Activated T-helper 2 cell treated with anti-CD3 and anti-CD28 coated beads, Interferon-gamma antibody, Interleukin-2, Interleukin-4, amounts not matched to agents 10 μg/mL and 5 μg/mL and 100 μg/mL, durations not matched to agents 14 hours and 24 hours and 36 hours (primary cell): ENCODE measurements at regions of chr1 and their contacts with region 1.

Region 1: GRCh38 chr1:166975361-166976129 is at the start of gene ILDR2:
- DNase-seq: peak; percentile 54
- H3K4me3 Mint-ChIP-seq: peak within 1 kb of the TSS; percentile 97
- H3K27ac Mint-ChIP-seq: peak within 1 kb of the TSS; percentile 88
- H3K4me1 Mint-ChIP-seq: peaks cover 54% of the 10 kb centered on the region
- H3K27me3 Mint-ChIP-seq: peaks cover 18% of the 10 kb centered on the region
- total RNA-seq, gene ILDR2: 18.5 and 22.8 TPM in 2 replicates

Region 2: GRCh38 chr1:166544561-166544960 is 431.0 kb before region 1 on chr1:
- intact Hi-C with region 1: no loop called
- DNase-seq: no peak
- H3K4me3 Mint-ChIP-seq: no peak overlapping the region
- H3K27ac Mint-ChIP-seq: no peak overlapping the region
- H3K4me1 Mint-ChIP-seq: no peaks in the 10 kb centered on the region
- H3K27me3 Mint-ChIP-seq: no peaks in the 10 kb centered on the region

Region 3: DNA sequence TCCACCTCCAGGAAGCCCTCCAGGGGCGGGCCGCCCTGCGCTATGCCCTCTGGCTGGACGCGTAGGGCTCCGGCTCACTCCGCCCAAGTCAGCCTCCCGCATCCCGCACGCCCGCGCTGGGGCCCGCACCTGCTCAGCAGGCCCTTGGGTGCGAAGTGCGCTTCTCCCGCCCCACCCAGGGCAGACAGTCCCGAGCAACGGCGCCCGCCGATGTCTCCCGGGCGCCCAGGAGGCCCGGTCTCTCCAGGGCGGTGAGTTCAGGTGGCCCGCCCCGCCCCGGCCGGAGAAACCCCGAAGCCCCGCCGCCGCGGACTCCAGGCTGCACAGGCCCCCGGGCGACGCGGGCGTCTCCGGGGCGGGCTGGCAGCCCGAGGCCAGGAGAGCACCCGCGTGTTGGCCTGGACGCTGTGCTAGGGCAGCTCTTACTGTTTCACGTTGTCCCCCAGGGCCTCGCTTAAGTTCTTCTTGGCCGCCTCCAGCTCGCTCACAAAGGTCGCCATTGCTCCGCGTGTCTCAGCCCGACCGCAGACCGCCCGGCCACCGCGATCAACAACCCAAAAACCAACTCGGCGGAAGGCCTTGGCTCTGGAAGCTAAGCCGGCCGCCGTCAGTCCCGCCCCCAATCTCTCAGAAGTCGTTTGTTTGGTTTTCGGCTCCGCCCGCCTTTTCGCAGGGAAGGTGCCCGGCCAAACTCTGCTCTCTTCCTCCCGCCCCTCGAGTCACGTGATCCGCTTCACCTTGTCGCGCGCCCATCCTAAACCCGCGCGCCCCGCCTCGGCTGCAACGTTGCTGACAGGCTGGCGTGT is 99.6 kb before region 1 on chr1 and contains the start of gene TADA1:
- intact Hi-C with region 1: loop called (anchors 2 kb)
- DNase-seq: peak; percentile 98
- H3K4me3 Mint-ChIP-seq: peak within 1 kb of the TSS; percentile 96
- H3K27ac Mint-ChIP-seq: peak within 1 kb of the TSS; percentile 99
- H3K4me1 Mint-ChIP-seq: peaks cover 45% of the 10 kb centered on the region
- H3K27me3 Mint-ChIP-seq: peaks cover 2% of the 10 kb centered on the region
- total RNA-seq, gene TADA1: 15.3 and 16.0 TPM in 2 replicates

Region 4: DNA sequence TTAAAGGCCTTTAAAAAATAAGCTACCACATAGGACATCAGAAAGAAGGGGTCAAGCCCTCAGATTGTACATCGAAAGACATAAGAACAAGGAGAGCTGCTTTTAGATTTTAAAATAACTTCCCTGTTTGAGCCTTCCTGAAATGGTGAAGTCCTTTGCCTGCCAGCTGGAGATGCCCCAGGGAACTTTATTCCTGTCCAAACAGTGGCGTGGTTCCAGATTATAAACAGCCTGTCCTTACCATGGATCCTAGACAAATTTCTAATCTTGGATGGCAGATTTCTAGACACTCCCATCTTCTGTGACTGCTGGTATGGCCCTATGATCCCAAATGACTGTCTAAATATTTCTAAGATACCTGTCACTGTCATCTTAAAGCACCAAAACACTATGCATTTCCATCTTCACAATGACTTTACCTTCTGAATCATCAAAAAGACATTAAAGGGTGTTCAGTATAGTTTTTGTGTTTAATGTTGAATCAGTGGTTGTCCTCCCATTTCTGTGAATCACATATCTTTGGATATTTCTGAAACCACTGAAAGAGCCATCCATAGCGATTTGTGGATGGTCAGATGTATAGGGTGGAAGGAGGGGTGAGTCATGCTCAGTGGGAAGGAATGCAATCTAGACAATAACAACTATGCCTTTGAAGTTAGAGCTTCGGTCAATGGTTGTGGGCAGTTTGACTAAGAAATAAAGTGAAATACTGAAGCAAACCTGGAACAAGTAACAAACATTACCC is 23.4 kb before region 1 on chr1:
- intact Hi-C with region 1: loop called (anchors 1 kb)
- DNase-seq: no peak
- H3K4me3 Mint-ChIP-seq: no peak overlapping the region
- H3K27ac Mint-ChIP-seq: no peak overlapping the region
- H3K4me1 Mint-ChIP-seq: peaks cover 31% of the 10 kb centered on the region
- H3K27me3 Mint-ChIP-seq: peaks cover 21% of the 10 kb centered on the region

Region 5: DNA sequence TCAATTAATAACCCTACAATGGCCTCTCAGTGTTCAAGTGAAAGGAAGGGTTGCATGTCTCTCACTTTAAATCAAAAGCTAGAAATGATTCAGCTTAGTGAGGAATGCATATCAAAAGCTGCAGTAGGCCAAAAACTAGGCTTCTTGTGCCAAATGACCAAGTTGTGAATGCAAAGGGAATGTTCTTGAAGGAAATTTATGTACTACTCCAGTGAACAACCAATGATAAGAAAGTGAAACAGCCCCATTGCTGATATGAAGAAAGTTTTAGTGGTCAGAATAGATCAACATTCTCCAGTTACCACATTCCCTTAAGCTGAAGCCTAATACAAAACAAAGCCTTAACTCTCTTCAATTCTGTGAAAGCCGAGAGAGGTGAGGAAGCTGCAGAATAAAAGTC is 23.5 kb after region 1 on chr1:
- intact Hi-C with region 1: loop called (anchors 1 kb)
- DNase-seq: no peak
- H3K4me3 Mint-ChIP-seq: no peak overlapping the region
- H3K27ac Mint-ChIP-seq: peak overlapping the region; percentile 20
- H3K4me1 Mint-ChIP-seq: peaks cover 16% of the 10 kb centered on the region
- H3K27me3 Mint-ChIP-seq: peaks cover 7% of the 10 kb centered on the region

Region 6: GRCh38 chr1:167022384-167022783 is 46.8 kb after region 1 on chr1:
- intact Hi-C with region 1: no loop called
- DNase-seq: no peak
- H3K4me3 Mint-ChIP-seq: no peak overlapping the region
- H3K27ac Mint-ChIP-seq: no peak overlapping the region
- H3K4me1 Mint-ChIP-seq: no peaks in the 10 kb centered on the region
- H3K27me3 Mint-ChIP-seq: peaks cover 33% of the 10 kb centered on the region

Region 7: GRCh38 chr1:167059045-167059808 is 83.7 kb after region 1 on chr1:
- intact Hi-C with region 1: loop called (anchors 2 kb)
- DNase-seq: peak; percentile 48
- H3K4me3 Mint-ChIP-seq: no peak overlapping the region
- H3K27ac Mint-ChIP-seq: no peak overlapping the region
- H3K4me1 Mint-ChIP-seq: peaks cover 6% of the 10 kb centered on the region
- H3K27me3 Mint-ChIP-seq: no peaks in the 10 kb centered on the region